ENCODE measurements at regions of chr21 and their contacts with region 1.

Region 1: DNA sequence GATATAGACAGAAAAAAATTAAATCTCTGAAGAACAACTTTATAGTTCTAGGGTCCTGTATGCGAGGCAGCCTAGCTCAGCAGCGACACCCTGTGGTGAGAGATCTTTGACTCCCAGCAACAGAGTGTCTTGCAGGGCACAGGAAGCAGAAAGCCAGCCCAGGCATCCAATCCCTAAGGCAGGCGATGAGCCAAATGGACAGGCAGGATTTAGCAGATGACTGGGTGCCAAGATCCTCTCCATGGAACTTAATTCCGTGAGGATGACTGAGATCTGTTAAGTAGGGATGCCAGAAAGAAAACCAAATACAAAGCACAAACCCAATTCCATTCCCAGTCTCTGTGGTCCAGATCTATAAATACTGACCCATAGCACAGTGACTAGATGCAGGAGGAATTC is 38.8 kb downstream of the HLCS start:
- DNase-seq: peak; percentile 86 to 92
- ATAC-seq: peak; percentile 85
- H3K4me3 ChIP-seq: no peak overlapping the region
- H3K27ac ChIP-seq: no peak overlapping the region
- H3K4me1 ChIP-seq: no peaks in the 10 kb centered on the region
- H3K27me3 ChIP-seq: no peaks in the 10 kb centered on the region

Region 2: GRCh38 chr21:36419996-36420395 is 507.7 kb before region 1 on chr21:
- intact Hi-C with region 1: loop called (anchors 5 kb)
- DNase-seq: peak; percentile 91
- ATAC-seq: peak; percentile 83
- H3K4me3 ChIP-seq: no peak overlapping the region
- H3K27ac ChIP-seq: no peak overlapping the region
- H3K4me1 ChIP-seq: no peaks in the 10 kb centered on the region
- H3K27me3 ChIP-seq: no peaks in the 10 kb centered on the region

Region 3: DNA sequence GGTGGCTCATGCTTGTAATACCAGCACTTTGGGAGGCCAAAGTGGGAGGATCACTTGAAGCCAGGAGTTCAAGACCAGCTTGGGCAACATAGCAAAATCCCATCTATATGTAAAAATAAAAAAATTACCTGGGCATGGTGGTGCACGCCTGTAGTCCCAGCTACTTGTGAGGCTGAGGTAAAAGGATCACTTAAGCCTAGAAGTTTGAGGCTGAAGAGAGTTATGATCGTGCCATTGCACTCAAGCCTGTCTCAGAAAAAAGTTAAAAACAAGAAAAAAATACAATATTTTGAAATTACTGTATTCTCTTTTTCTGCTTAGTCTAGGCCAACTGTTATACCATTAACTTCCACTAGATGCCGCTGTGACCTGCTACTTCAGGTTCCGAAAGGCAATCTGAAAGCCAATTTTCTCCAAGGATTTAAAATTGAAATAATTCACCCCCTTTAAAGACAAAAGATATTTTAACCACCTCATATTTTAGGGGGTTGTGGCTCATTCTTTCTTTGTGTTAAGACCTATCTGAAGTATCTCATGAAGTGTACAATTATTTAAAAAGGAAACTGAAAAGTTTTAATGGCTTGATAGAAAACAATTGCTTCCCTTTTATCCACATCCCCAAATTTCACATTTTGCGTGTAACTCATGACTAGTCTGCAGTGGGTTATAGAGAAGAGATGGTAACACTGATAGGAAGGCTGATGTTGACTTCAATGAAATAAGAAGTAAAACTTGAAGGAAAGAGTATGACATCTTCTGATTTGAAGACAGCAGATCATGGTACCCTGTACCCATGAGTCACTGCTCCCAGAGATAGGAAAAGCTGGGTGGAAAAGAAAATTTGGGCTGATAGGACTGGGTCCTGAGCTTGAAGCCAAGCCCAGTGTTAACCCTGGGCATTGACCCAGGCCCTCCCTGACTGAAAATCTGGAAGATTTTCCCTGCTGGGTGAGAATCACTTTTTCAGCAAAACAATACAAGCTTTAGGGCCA is 423.4 kb before region 1 on chr21:
- intact Hi-C with region 1: loop called (anchors 2 kb)
- DNase-seq: no peak
- ATAC-seq: peak; percentile 69
- H3K4me3 ChIP-seq: no peak overlapping the region
- H3K27ac ChIP-seq: no peak overlapping the region
- H3K4me1 ChIP-seq: no peaks in the 10 kb centered on the region
- H3K27me3 ChIP-seq: no peaks in the 10 kb centered on the region

Region 4: DNA sequence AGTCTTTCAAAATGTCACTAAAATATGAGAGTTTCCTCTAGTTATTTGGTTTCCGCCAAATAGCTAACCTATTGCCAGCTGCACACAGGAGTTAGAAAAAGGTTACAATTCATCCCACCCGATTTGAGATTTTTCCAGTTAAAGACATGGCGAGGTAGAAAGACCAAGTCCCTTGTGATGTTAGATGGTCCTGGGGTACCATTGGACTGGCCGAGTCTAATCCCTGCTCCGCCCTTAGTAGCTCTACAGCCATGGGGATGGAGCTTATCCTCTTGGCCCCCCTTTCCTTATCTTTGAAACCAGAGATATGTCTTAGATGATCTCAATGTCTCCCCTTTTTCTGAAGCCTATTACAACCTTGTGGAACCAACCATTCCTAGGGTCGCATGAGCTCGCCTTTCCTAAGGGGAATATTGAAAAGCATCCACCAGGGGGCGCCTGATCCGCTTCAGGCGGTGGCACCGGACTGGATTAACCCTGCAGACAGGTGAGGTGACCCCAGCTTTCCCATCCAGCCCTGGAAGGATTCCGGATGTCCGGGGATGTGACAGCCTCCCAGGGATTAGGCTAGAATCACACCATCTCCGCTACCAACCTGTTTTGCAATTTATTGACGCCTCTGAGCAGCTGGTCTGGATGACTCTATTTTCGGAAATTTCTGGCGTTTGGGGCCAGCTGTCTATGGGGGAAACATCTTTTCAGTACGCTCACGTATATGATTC is 297.1 kb before region 1 on chr21:
- intact Hi-C with region 1: loop called (anchors 5 kb)
- DNase-seq: peak in 1 of 2 donors; percentile 57
- ATAC-seq: no peak
- H3K4me3 ChIP-seq: no peak overlapping the region
- H3K27ac ChIP-seq: no peak overlapping the region
- H3K4me1 ChIP-seq: no peaks in the 10 kb centered on the region
- H3K27me3 ChIP-seq: no peaks in the 10 kb centered on the region

Region 5: DNA sequence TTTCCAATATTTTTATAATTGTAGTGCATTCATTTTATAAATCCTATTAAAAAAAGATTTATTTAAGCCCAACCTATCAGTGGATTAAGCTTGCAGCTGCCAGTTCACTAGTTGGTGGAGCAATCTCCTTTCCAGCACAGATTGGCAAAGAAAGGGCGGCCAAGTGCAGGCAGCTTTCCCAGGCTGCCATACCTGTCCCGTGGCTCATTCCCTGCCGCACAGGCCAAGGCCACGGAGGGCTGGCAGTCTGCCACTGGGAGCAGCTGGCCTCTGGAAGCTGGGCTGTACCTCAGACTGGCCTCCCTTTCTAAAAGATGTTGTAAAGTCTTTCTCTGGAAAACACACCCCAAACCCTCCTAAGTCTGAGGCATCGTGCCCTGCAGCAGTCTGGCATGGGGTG is 154.6 kb before region 1 on chr21:
- intact Hi-C with region 1: loop called in 1 of 2 experiments (anchors 10 kb)
- DNase-seq: peak; percentile 85 to 92
- ATAC-seq: peak; percentile 64
- H3K4me3 ChIP-seq: no peak overlapping the region
- H3K27ac ChIP-seq: no peak overlapping the region
- H3K4me1 ChIP-seq: no peaks in the 10 kb centered on the region
- H3K27me3 ChIP-seq: no peaks in the 10 kb centered on the region

Region 6: GRCh38 chr21:37032877-37033471 is 105.3 kb after region 1 on chr21:
- intact Hi-C with region 1: no loop called
- DNase-seq: no peak
- ATAC-seq: no peak
- H3K4me3 ChIP-seq: no peak overlapping the region
- H3K27ac ChIP-seq: no peak overlapping the region
- H3K4me1 ChIP-seq: no peaks in the 10 kb centered on the region
- H3K27me3 ChIP-seq: no peaks in the 10 kb centered on the region

Region 7: GRCh38 chr21:38042246-38042645 is 1114.5 kb after region 1 on chr21:
- intact Hi-C with region 1: no loop called
- DNase-seq: no peak
- ATAC-seq: no peak
- H3K4me3 ChIP-seq: no peak overlapping the region
- H3K27ac ChIP-seq: no peak overlapping the region
- H3K4me1 ChIP-seq: no peaks in the 10 kb centered on the region
- H3K27me3 ChIP-seq: peaks cover 0 to 1% of the 10 kb centered on the region in 2 donors